ENCODE measurements at regions of chr4 and their contacts with region 1.

Region 1: DNA sequence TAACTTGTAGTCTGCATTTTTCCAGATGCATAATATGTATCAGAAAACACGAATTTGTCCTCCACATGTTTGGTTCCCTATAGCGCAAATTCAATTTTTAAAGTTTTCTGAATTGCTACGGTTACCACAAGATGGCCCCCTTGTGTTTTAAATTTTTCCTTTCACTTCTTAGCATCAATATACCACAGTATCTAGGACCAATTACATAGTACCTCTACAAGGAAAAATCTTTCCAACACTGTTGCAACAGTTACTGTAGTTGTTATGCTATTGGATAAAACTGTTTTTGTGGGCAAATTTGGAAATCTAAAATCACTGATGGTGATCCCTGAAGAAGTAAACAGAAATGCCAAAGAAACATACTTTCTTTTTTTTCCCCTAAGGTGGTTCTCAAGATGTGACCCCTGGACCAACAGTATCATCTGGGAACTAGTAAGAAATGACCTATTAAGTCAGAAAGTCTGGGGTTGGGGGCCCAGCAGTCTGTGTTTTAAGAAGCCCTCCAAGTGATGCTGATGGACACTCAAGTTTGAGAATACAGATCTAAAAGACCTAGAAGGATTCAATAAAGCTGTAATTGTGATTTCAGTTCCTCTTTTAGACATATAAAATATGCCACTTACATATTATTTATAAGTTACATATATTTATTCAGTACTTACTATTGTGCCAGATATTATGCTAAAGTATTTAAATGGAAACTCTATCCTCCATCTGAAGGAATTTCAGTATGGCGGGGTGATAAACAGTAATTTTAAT is 3.1 kb downstream of the ZGRF1 start:
- DNase-seq: no peak
- ATAC-seq: no peak

Region 2: GRCh38 chr4:112765317-112765975 is 131.8 kb after region 1 on chr4:
- intact Hi-C with region 1: loop called (anchors 5 kb)
- DNase-seq: no peak
- ATAC-seq: peak; percentile 61

Region 3: GRCh38 chr4:112942077-112942476 is 308.4 kb after region 1 on chr4:
- intact Hi-C with region 1: loop called (anchors 5 kb)
- DNase-seq: no peak
- ATAC-seq: no peak